Ascending aorta (tissue), 2 donors: ENCODE measurements at regions of chr14 and their contacts with region 1.

Region 1: DNA sequence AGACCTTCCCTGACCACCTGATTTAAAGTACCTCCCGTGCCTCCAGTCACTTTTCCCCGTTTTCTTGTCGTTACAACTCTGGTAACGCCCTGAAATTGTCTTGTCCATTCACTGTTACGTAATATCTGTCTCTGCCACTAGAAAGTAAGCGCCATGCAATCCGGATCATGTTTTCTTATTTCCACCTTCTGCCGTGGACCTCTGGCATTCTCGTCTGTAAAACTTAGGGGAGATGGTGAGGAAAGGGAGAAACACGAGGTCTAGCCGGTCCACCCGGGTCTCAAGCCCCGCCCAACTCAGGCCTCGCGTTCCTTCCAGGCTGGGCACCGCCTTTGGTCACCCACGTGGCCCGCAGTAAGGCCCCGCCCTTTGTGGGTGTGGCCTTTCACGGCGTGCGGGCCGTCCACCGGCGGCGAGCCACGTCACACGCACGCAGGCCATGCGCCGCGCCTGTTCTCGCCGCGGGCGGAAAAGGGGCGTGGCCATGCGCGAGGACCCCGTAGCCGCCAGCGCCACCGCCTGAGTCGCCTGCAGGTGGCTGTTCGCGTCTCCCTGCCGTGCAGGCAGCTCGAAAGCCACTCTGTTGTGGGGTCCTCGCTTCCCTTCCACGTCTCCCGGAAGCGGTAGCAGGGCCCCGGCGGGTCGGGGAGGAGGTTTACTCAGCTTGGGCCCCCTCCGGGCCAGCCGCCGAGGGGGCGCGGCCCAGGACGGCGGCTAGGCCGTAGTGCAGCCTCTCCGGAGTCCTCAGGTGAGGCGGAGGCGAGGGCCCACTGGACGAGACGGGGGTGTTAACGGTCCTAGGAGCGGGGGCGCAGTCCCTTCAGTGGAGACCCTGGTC is at the start of gene GOLGA5:
- DNase-seq: peak; percentile 88 to 99
- H3K4me3 ChIP-seq: peak within 1 kb of the TSS; percentile 80 to 98
- H3K27ac ChIP-seq: peak within 1 kb of the TSS; percentile 85 to 93
- H3K4me1 ChIP-seq: peaks cover 0 to 16% of the 10 kb centered on the region in 2 donors
- H3K27me3 ChIP-seq: no peaks in the 10 kb centered on the region
- CTCF ChIP-seq: peak; percentile 7 to 23 (median 15)
- total RNA-seq, gene GOLGA5: 26.3 TPM

Region 2: DNA sequence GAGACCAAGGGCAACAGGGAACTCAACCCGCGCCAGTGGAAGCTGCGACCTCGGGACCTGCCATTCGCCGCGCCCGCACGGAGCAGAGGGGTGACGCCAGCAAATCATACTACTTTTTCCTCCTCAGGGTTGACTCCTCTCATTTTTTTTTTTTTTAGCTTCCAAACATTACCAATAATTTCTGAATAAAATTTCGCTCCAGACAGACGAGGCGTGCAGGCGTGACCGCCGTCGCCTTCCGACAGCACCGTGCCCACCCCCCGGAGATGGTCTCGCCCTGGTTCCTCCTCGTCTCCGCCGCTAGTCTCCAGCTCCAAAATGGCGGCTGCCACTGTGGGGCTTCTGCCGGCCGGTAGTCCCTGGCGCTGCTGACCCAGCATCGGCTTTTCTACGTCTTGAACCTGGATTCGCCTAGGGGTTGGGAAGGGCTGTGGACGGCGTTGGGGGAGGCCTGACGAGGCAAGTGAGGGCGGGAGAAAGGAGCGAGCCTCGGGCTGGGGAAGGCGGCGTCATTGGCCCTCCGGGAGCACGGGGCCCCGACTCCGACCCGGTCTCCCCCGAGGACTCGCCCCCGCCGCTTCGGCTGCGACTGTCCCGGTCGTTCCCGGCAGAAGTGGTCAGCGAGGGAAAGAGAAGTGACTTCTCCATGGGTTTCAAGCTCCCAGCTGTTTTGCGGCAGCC is 672.1 kb before region 1 on chr14 and contains the starts of genes CPSF2 and NDUFB1:
- intact Hi-C with region 1: loop called (anchors 1 kb)
- DNase-seq: peak in 1 of 2 donors; percentile 86
- H3K4me3 ChIP-seq: peak within 1 kb of the TSS; percentile 77 to 90
- H3K27ac ChIP-seq: peak within 1 kb of the TSS; percentile 89 to 94
- H3K4me1 ChIP-seq: peaks cover 0 to 12% of the 10 kb centered on the region in 2 donors
- H3K27me3 ChIP-seq: no peaks in the 10 kb centered on the region
- CTCF ChIP-seq: peak in 1 of 3 experiments; percentile 26
- total RNA-seq, gene CPSF2: 8.0 TPM
- total RNA-seq, gene NDUFB1: 867 TPM

Region 3: GRCh38 chr14:92748259-92749016 is 45.5 kb before region 1 on chr14 and contains the start of gene LGMN:
- intact Hi-C with region 1: loop called (anchors 1 kb)
- DNase-seq: peak; percentile 86 to 98
- H3K4me3 ChIP-seq: peak within 1 kb of the TSS; percentile 81 to 84
- H3K27ac ChIP-seq: peak within 1 kb of the TSS; percentile 88 to 93
- H3K4me1 ChIP-seq: peaks cover 0 to 7% of the 10 kb centered on the region in 2 donors
- H3K27me3 ChIP-seq: no peaks in the 10 kb centered on the region
- CTCF ChIP-seq: no peak
- total RNA-seq, gene LGMN: 76.7 TPM